Calu3 (cell line): ENCODE measurements at regions of chr12 and their contacts with region 1.

Region 1: DNA sequence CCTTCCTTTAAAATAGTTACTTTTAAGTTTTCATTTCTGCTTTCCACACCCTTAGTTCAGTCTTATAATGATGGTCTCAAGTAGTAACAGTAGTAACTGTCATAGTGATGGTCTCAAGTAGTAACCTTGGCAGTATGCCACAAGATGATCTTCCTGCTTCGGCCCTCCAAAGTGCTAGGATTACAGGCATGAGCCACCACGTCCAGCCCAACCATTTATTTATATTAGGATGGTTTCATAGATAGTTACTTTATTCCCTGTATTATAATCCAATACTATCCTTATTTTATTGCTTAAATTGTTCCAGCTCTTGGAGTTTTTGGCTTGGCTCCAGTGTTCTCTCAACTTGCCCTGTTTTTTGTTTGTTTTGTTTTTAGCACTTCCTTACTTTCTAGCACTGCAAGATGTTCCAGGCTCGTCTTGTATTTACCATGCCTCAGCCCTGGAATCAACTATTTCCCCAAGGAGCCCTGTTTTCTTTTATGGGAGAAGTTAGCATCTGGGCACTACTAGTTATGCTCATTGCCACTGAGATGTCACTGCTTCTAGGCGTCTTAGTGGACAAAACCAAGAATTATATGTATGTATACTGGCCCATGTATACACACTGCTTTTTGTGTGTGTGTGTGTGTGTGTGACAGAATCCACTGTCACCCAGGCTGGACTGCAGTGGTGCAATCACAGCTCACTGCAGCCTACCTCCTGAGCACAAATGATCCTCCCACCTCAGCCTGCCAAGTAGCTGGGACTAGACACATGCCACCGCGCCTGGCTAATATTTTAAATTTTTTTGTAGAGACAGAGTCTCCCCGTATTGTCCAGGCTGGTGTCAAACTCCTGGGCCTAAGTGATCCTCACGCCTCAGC is 25.4 kb downstream of the LIMA1 start:
- DNase-seq: no peak
- H3K4me3 Mint-ChIP-seq: peak overlapping the region; percentile 31
- H3K27ac Mint-ChIP-seq: peak overlapping the region; percentile 92
- H3K4me1 Mint-ChIP-seq: peaks cover 75% of the 10 kb centered on the region
- H3K27me3 Mint-ChIP-seq: no peaks in the 10 kb centered on the region
- CTCF ChIP-seq: no peak

Region 2: DNA sequence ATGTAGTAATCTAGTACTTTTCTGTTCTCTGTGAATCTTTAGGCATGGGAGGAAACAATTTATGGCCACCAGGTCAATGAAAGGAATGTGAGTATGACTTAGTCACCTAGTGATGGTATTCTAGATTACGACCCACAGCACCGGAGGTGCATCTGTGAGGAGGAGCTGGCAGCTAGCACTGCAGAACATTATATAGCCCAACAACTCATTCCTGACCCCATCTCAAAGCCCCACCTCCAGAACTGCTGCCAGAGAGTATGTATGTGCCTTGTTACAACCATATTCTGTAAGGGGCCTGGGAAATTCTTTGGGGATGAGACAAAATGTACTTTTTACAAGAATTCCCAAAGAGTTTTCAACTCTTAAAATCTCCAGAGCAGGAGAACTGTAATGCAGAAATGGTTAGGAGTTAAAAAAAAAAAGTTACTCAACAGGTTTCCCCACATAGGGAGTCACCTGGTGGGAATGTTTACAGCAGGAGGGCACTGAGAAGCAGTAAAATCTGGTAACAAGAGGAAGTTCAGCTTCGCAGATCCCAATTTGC is 55.9 kb before region 1 on chr12:
- CTCF ChIA-PET with region 1: interaction called, 3 read pairs
- intact Hi-C with region 1: loop called (anchors 5 kb)
- DNase-seq: peak; percentile 42
- H3K4me3 Mint-ChIP-seq: no peak overlapping the region
- H3K27ac Mint-ChIP-seq: peak overlapping the region; percentile 72
- H3K4me1 Mint-ChIP-seq: peaks cover 14% of the 10 kb centered on the region
- H3K27me3 Mint-ChIP-seq: no peaks in the 10 kb centered on the region
- CTCF ChIP-seq: no peak

Region 3: DNA sequence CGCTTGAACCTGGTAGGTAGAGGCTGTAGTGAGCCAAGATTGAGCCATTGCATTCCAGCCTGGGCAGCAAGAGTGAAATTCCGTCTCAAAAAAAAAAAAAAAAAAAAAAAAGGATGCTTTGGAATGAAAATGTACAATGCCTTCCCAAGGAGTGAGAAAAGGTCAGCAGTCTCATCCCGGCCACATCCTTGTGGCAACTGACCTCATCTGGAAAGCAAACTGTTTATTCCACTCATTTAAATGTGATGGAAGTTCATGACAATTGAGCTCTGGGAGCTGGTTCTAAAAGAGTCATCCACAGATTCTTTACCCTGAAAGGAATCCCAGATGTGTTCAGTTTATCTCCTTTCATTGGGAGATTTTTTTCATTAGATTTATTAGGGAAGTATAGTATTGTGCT is 44.8 kb after region 1 on chr12:
- CTCF ChIA-PET with region 1: no interaction called
- intact Hi-C with region 1: no loop called
- DNase-seq: no peak
- H3K4me3 Mint-ChIP-seq: no peak overlapping the region
- H3K27ac Mint-ChIP-seq: no peak overlapping the region
- H3K4me1 Mint-ChIP-seq: peaks cover 17% of the 10 kb centered on the region
- H3K27me3 Mint-ChIP-seq: no peaks in the 10 kb centered on the region
- CTCF ChIP-seq: no peak

Region 4: GRCh38 chr12:50550530-50551223 is 292.8 kb after region 1 on chr12:
- CTCF ChIA-PET with region 1: no interaction called
- intact Hi-C with region 1: no loop called
- DNase-seq: peak; percentile 44
- H3K4me3 Mint-ChIP-seq: no peak overlapping the region
- H3K27ac Mint-ChIP-seq: peak overlapping the region; percentile 62
- H3K4me1 Mint-ChIP-seq: peaks cover 35% of the 10 kb centered on the region
- H3K27me3 Mint-ChIP-seq: no peaks in the 10 kb centered on the region
- CTCF ChIP-seq: no peak